Endothelial cell of umbilical vein (primary cell): ENCODE measurements at regions of chr20 and their contacts with region 1.

Region 1: GRCh38 chr20:9978397-9979004 is 56.3 kb upstream of the ANKEF1 start:
- DNase-seq: peak; percentile 87
- H3K4me3 ChIP-seq: no peak overlapping the region
- H3K27ac ChIP-seq: no peak overlapping the region
- H3K4me1 ChIP-seq: peaks cover 8% of the 10 kb centered on the region
- H3K27me3 ChIP-seq: peaks cover 1 to 6% of the 10 kb centered on the region in 2 experiments
- CTCF ChIP-seq: peak; percentile 65 to 68
- POLR2A ChIP-seq: no peak

Region 2: GRCh38 chr20:9616833-9617489 is 361.5 kb before region 1 on chr20:
- CTCF ChIA-PET with region 1: interaction called, 18 read pairs
- POLR2A ChIA-PET with region 1: no interaction called
- dilution Hi-C with region 1: no loop called
- intact Hi-C with region 1: loop called (anchors 1 kb)
- DNase-seq: peak; percentile 62
- H3K4me3 ChIP-seq: no peak overlapping the region
- H3K27ac ChIP-seq: no peak overlapping the region
- H3K4me1 ChIP-seq: no peaks in the 10 kb centered on the region
- H3K27me3 ChIP-seq: peaks cover 7 to 8% of the 10 kb centered on the region in 2 experiments
- CTCF ChIP-seq: peak; percentile 69 to 70
- POLR2A ChIP-seq: no peak

Region 3: GRCh38 chr20:10219452-10219791 is 240.9 kb after region 1 on chr20:
- CTCF ChIA-PET with region 1: interaction called, 9 read pairs
- POLR2A ChIA-PET with region 1: no interaction called
- dilution Hi-C with region 1: no loop called
- intact Hi-C with region 1: loop called (anchors 1 kb)
- DNase-seq: peak; percentile 78
- H3K4me3 ChIP-seq: peak overlapping the region in 2 of 3 experiments; percentile 26 to 75
- H3K27ac ChIP-seq: no peak overlapping the region
- H3K4me1 ChIP-seq: peaks cover 4% of the 10 kb centered on the region
- H3K27me3 ChIP-seq: peaks cover 24 to 36% of the 10 kb centered on the region in 2 experiments
- CTCF ChIP-seq: peak in 1 of 2 donors; percentile 3
- POLR2A ChIP-seq: no peak

Region 4: DNA sequence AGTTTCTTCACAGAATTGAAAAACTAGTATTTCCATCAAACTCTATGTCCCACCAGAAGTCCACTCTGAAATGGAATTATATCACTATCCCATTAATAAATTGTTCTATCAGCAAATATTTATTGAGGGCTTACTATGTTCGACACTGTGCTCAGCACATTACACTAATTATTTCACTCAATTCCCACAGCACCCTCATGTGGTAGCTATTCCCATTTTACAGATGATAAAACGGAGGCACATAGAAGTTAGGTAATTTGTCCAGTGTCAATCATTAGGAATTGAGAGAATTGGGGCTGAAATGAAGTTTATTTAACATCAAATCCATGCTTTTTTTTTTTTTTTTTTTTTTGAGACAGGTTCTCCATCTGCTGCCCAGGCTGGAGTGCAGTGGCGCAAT is 403.0 kb after region 1 on chr20:
- CTCF ChIA-PET with region 1: interaction called, 11 read pairs
- POLR2A ChIA-PET with region 1: no interaction called
- dilution Hi-C with region 1: no loop called
- intact Hi-C with region 1: loop called (anchors 1 kb)
- DNase-seq: peak; percentile 31
- H3K4me3 ChIP-seq: no peak overlapping the region
- H3K27ac ChIP-seq: no peak overlapping the region
- H3K4me1 ChIP-seq: peaks cover 7% of the 10 kb centered on the region
- H3K27me3 ChIP-seq: no peaks in the 10 kb centered on the region
- CTCF ChIP-seq: peak in 1 of 2 donors; percentile 15
- POLR2A ChIP-seq: no peak

Region 5: GRCh38 chr20:10434832-10435812 is 456.6 kb after region 1 on chr20 and contains the start of gene SLX4IP:
- CTCF ChIA-PET with region 1: interaction called, 74 read pairs
- POLR2A ChIA-PET with region 1: no interaction called
- dilution Hi-C with region 1: no loop called
- intact Hi-C with region 1: loop called (anchors 2 kb)
- DNase-seq: peak; percentile 95
- H3K4me3 ChIP-seq: peak within 1 kb of the TSS; percentile 96 to 99 (median 97)
- H3K27ac ChIP-seq: peak within 1 kb of the TSS; percentile 97
- H3K4me1 ChIP-seq: peaks cover 15% of the 10 kb centered on the region
- H3K27me3 ChIP-seq: no peaks in the 10 kb centered on the region
- CTCF ChIP-seq: no peak
- POLR2A ChIP-seq: peak; percentile 63
- total RNA-seq, gene SLX4IP: 4.1 and 4.5 TPM in 2 replicates

Region 6: GRCh38 chr20:10553326-10553984 is 575.0 kb after region 1 on chr20:
- CTCF ChIA-PET with region 1: interaction called, 5 read pairs
- POLR2A ChIA-PET with region 1: no interaction called
- dilution Hi-C with region 1: no loop called
- intact Hi-C with region 1: loop called (anchors 2 kb)
- DNase-seq: peak; percentile 84
- H3K4me3 ChIP-seq: no peak overlapping the region
- H3K27ac ChIP-seq: no peak overlapping the region
- H3K4me1 ChIP-seq: peaks cover 15% of the 10 kb centered on the region
- H3K27me3 ChIP-seq: no peaks in the 10 kb centered on the region
- CTCF ChIP-seq: peak; percentile 64 to 70
- POLR2A ChIP-seq: no peak